ENCODE measurements at regions of chr5 and their contacts with region 1.

Region 1: GRCh38 chr5:119943148-119943547 is 313.8 kb downstream of the FAM170A start:
- DNase-seq: no peak
- ATAC-seq: peak; percentile 52

Region 2: DNA sequence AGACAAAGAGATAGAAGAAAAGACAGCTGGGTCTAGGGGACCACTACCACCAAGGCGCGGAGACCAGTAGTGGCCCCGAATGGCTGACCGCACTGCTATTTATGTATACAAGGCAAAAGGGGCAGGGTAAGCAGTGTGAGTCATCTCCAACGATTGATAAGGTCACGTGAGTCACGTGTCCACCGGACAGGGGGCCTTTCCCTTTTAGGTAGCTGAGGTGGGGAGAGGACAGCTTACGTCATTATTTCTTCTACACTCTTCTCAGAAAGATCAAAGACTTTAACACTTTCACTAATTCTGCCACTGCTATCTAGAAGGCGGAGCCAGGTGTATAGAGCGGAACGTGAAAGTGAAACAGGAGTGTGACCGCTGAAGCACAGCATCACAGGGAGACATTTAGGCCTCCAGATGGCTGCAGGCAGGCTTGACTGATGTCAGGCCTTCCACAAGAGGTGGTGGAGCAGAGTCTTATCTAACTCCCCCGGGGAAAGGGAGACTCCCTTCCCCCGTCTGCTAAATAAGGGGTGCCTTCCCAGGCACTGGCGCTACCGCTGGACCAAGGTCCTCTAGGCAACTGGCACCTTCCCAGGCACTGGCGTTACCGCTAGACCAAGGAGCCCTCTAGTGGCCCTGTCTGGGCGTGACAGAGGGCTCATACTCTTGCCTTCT is 514.8 kb after region 1 on chr5:
- intact Hi-C with region 1: loop called (anchors 5 kb)
- DNase-seq: peak; percentile 91
- ATAC-seq: peak; percentile 68

Region 3: GRCh38 chr5:120684749-120685415 is 741.7 kb after region 1 on chr5:
- intact Hi-C with region 1: loop called (anchors 10 kb)
- DNase-seq: no peak
- ATAC-seq: no peak

Region 4: GRCh38 chr5:120803282-120803681 is 860.1 kb after region 1 on chr5:
- intact Hi-C with region 1: loop called (anchors 5 kb)
- DNase-seq: no peak
- ATAC-seq: no peak

Measured in Right ventricle myocardium inferior (tissue), 1 donor.